Right lobe of liver (tissue), 6 donors: ENCODE measurements at regions of chr6 and their contacts with region 1.

Region 1: DNA sequence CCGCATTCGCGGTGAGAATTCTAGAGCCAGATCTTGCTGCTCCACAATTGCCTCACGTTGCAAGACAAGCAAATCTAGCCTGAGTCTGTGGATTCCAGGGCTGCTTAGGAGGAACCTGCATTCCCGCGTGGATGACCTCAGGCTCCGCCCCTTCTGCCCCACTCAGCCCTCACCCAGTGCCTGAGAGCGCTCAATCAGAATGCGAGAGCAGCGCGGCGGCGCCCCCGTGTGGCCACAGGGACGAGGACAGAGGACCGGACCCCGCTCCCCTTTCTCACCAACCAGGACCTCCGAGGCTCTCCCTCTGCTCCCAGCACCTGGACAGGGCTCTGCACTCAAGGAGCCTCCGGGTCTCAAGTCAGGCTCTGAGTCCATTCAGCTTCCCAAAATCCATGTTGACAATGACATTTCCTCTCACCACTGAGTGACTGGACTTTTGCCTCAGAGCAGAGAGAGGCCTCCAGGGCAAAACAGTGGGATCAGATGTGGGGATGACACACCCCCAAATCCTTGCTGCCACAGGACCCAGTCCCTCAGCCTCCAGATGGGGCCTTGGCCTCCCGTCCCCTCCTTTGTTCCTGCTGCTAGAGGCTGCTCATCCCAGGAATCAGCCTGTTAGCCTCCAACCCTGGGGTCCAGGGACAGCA is 52.0 kb downstream of the RPP21 start:
- DNase-seq: peak; percentile 82 to 86 (median 86)
- ATAC-seq: peak; percentile 98 to 99 (median 99)
- H3K4me3 ChIP-seq: no peak overlapping the region
- H3K27ac ChIP-seq: no peak overlapping the region
- H3K4me1 ChIP-seq: no peaks in the 10 kb centered on the region
- H3K27me3 ChIP-seq: no peaks in the 10 kb centered on the region
- CTCF ChIP-seq: peak; percentile 74 to 92 (median 90)
- POLR2A ChIP-seq: no peak

Region 2: GRCh38 chr6:30113003-30113759 is 283.8 kb before region 1 on chr6 and contains the start of gene TRIM31:
- intact Hi-C with region 1: no loop called
- DNase-seq: no peak
- ATAC-seq: peak; percentile 55 to 92 (median 73)
- H3K4me3 ChIP-seq: peak within 1 kb of the TSS in 1 of 3 donors; percentile 24
- H3K27ac ChIP-seq: peak within 1 kb of the TSS in 1 of 3 donors; percentile 50
- H3K4me1 ChIP-seq: peaks cover 0 to 10% (median 0%) of the 10 kb centered on the region in 4 donors
- H3K27me3 ChIP-seq: no peaks in the 10 kb centered on the region
- CTCF ChIP-seq: no peak
- POLR2A ChIP-seq: no peak
- total RNA-seq, gene TRIM31: 0.32 to 5.1 (median 0.60) TPM

Region 3: DNA sequence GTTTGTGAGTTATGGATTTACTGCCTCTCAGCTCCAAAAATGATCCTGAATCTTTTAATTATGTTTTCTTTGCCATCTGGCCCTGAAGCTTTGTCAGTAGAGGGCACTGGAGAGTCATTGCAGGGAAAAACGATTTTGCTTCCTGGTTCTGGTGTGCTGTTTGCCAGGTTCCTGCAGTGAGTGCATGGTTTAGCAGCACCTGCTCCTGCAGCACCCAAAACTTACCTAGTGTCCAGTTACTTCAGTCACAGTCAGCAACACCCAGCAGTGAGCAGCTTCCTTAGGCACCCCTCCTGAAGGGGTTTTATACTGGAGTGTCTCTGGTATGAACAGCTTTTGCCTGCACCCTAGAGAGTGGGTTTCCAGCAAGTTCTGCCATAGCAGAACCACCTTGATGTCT is 177.7 kb before region 1 on chr6:
- intact Hi-C with region 1: loop called (anchors 5 to 10 kb)
- DNase-seq: no peak
- ATAC-seq: peak; percentile 84 to 91 (median 89)
- H3K4me3 ChIP-seq: no peak overlapping the region
- H3K27ac ChIP-seq: no peak overlapping the region
- H3K4me1 ChIP-seq: peaks cover 0 to 10% (median 3%) of the 10 kb centered on the region in 4 donors
- H3K27me3 ChIP-seq: no peaks in the 10 kb centered on the region
- CTCF ChIP-seq: peak; percentile 78 to 87 (median 85)
- POLR2A ChIP-seq: no peak

Region 4: DNA sequence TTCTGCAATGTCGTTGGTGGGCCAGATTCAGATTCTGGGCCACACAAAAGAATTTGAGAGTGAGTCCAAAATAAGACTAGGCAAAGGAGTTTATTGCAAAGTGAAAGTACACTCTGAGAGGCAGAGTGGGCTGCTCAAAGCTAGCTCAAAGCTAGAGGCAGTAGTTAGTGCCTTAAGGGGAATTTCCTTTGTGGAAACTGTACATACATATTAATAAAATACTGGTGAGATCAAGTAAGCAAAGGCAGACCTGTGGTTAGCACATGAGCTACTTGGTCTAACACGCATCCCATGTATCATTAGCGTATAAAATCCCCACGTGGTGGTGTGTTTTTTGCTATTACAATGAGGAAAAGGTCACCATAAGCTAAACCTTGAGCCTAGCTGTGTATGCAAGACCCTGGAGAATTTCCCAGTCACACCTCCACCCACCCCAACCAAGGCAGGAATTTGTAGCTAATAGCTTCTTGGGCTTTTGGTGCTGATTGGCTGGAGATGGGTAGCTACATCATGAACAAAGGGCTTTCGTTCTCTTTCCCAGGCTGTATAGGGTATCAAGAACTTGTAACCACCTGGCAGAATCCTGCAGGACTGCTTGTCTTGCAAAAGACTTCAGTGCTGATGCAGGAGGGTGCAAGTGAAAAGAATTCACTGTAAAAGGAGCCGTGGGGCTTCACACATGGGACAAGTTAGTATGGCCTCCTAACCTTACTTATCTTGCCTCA is 169.0 kb before region 1 on chr6:
- intact Hi-C with region 1: loop called in 1 of 2 experiments (anchors 10 kb)
- DNase-seq: no peak
- ATAC-seq: no peak
- H3K4me3 ChIP-seq: no peak overlapping the region
- H3K27ac ChIP-seq: no peak overlapping the region
- H3K4me1 ChIP-seq: no peaks in the 10 kb centered on the region
- H3K27me3 ChIP-seq: no peaks in the 10 kb centered on the region
- CTCF ChIP-seq: no peak
- POLR2A ChIP-seq: no peak

Region 5: GRCh38 chr6:31053873-31054272 is 656.9 kb after region 1 on chr6:
- intact Hi-C with region 1: no loop called
- DNase-seq: no peak
- ATAC-seq: no peak
- H3K4me3 ChIP-seq: no peak overlapping the region
- H3K27ac ChIP-seq: no peak overlapping the region
- H3K4me1 ChIP-seq: no peaks in the 10 kb centered on the region
- H3K27me3 ChIP-seq: no peaks in the 10 kb centered on the region
- CTCF ChIP-seq: no peak
- POLR2A ChIP-seq: no peak